Activated T-helper 1 cell treated with anti-CD3 and anti-CD28 coated beads, Interleukin-12 subunit alpha, Interleukin-12 subunit beta, Interleukin-2, Interleukin-4 antibody, amounts not matched to agents 30 ng/mL and 10 ng/mL and 1 ng/mL, durations not matched to agents 14 hours and 24 hours and 36 hours (primary cell): ENCODE measurements at regions of chr5 and their contacts with region 1.

Region 1: GRCh38 chr5:180291943-180292831 is at the start of gene MAPK9:
- DNase-seq: peak; percentile 83
- H3K4me3 Mint-ChIP-seq: peak within 1 kb of the TSS; percentile 96
- H3K27ac Mint-ChIP-seq: peak within 1 kb of the TSS; percentile 98
- H3K4me1 Mint-ChIP-seq: peaks cover 26% of the 10 kb centered on the region
- H3K27me3 Mint-ChIP-seq: no peaks in the 10 kb centered on the region
- total RNA-seq, gene MAPK9: 39.8 and 44.6 TPM in 2 replicates

Region 2: DNA sequence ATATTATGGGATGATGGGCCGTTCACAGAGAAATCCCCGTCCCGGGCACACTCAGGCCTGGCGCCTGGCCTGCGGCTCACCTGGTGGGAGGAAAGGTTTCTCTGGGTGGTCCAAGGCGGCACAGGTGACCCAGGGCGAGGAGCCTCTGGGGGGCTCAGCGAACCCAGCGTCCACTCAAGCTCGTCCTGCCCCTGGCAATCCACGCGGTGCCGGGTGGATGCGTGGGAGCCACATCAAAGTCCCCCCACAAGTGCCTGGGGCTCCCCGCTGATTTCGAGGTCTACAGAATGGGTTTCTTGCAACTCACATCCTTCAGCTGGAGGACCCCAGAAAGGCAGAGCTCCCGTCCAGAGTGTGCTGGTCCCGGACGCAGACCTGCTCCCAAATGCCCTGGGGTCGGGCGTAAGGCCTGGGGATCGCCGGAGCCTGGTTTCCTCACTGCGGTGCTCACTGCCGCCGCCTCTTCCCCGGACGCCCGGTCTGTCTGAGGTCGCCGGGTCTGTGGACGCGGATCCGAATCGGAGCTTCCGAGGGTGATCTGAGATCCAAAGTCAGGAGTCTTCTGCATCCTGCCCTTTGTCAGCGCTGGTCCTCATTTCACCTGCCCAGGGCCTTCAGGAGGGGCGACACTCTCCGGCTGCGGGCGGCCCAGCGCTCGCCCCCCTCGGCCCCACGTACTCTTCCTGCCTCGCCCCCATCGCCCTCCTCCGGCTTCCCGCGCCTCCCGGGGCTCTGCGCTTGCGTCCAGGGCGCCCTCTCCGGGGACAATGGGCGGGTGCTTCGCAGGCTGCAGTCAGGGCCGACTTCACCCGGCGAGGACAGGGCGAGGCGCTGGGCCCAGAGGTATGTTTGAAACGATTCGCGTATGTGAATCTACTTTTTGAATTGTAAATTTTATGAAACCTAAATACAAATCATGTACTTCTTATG is 761.9 kb before region 1 on chr5:
- intact Hi-C with region 1: loop called (anchors 2 kb)
- DNase-seq: peak; percentile 50
- H3K4me3 Mint-ChIP-seq: peak overlapping the region; percentile 39
- H3K27ac Mint-ChIP-seq: no peak overlapping the region
- H3K4me1 Mint-ChIP-seq: peaks cover 14% of the 10 kb centered on the region
- H3K27me3 Mint-ChIP-seq: peaks cover 6% of the 10 kb centered on the region

Region 3: DNA sequence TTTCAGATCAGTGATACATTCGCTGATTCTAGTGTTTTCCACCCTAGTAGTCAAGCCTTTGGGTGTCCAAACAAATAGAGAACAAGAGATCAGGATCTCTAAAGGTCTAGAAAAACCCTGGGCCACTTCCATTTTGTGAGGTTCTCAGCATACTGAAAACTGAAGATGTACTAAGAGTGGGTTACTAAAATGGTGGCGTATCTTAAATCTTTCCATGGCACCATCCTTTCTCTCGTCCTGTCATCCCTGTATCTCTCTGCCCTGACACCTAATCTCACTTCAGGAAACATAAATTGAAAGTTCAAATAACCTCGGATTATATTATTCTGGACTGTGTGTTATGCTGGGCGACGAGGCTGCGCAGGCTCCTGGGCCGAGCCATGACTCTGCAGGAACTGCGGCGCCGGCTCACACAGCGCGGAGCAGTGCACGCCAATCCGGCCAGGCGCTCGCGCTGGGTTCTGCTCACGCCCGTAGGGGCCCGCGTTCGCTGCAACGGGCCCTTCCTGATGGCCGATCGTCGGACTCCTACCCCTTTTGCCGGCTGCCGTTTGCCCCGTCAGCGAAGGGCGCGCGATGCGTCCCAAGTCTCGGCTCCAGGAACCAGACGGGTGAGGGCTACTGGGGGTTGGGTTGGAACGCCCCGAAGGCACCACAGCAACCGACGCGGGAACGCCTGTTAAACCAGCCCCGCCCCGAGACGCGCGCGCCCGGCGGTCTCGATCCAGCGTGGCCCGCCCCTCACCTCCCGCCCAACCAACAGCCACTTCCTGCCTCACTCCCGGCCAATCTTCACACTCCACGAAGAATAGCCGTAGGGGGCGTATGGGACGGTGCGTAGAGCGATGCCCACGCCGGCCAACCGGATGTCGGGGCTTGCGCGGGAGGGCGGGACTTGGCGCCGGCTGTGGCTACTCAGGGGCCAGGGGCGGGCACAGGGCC is 593.9 kb before region 1 on chr5:
- intact Hi-C with region 1: loop called (anchors 10 kb)
- DNase-seq: peak; percentile 99
- H3K4me3 Mint-ChIP-seq: peak overlapping the region; percentile 100
- H3K27ac Mint-ChIP-seq: peak overlapping the region; percentile 100
- H3K4me1 Mint-ChIP-seq: peaks cover 27% of the 10 kb centered on the region
- H3K27me3 Mint-ChIP-seq: no peaks in the 10 kb centered on the region

Region 4: DNA sequence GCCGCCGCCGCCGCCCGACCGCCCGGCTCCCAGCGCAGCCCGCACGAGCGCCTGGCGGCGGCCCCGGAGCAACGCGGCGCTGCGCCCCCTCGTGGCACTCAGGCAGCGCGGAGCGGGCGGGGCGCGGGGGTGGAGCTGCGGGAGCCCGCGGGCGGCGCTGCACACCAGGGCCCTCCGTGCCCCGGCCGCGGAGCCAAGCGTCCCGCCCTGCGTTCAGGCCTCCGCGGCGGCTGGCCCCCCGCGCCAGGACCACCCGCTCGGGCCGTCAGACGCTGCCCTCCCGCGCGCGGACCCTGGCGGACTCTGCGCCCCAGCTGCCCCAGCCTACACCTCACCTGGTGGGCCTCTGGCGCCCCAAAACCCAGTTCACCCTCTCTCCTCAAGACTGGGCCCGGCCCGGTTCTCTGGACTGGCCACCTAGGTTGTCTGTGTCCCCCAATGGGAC is 83.0 kb before region 1 on chr5 and contains the start of gene RASGEF1C:
- intact Hi-C with region 1: loop called (anchors 2 kb)
- DNase-seq: peak; percentile 50
- H3K4me3 Mint-ChIP-seq: peak within 1 kb of the TSS; percentile 45
- H3K27ac Mint-ChIP-seq: no peak within 1 kb of the TSS
- H3K4me1 Mint-ChIP-seq: peaks cover 9% of the 10 kb centered on the region
- H3K27me3 Mint-ChIP-seq: peaks cover 26% of the 10 kb centered on the region
- total RNA-seq, gene RASGEF1C: not detected in 2 replicates

Region 5: DNA sequence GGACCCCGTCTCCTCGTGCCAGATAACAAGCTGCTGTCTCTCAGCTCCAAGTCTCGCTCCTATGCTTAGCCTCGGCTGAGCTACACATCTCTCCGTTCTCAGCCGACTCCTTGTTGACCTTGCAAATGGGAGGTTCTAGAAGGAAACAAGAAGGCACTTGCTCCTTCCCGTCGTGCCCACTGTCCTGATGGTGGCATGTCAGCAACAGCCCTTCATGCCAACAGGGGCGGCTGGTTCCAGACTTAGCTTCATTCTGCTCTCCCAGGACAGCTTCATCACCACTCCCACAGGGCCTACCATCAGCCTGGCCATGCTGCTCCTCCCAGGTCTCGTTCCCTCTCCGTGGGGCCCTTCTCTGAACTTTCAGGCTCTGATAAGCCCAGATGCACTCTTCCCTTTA is 70.1 kb before region 1 on chr5:
- intact Hi-C with region 1: no loop called
- DNase-seq: no peak
- H3K4me3 Mint-ChIP-seq: no peak overlapping the region
- H3K27ac Mint-ChIP-seq: no peak overlapping the region
- H3K4me1 Mint-ChIP-seq: no peaks in the 10 kb centered on the region
- H3K27me3 Mint-ChIP-seq: peaks cover 3% of the 10 kb centered on the region

Region 6: GRCh38 chr5:180328296-180329137 is 36.3 kb after region 1 on chr5:
- intact Hi-C with region 1: loop called (anchors 1 kb)
- DNase-seq: peak; percentile 67
- H3K4me3 Mint-ChIP-seq: no peak overlapping the region
- H3K27ac Mint-ChIP-seq: no peak overlapping the region
- H3K4me1 Mint-ChIP-seq: no peaks in the 10 kb centered on the region
- H3K27me3 Mint-ChIP-seq: peaks cover 24% of the 10 kb centered on the region

Region 7: GRCh38 chr5:180470966-180471582 is 178.9 kb after region 1 on chr5:
- intact Hi-C with region 1: loop called (anchors 1 kb)
- DNase-seq: peak; percentile 20
- H3K4me3 Mint-ChIP-seq: no peak overlapping the region
- H3K27ac Mint-ChIP-seq: no peak overlapping the region
- H3K4me1 Mint-ChIP-seq: no peaks in the 10 kb centered on the region
- H3K27me3 Mint-ChIP-seq: peaks cover 7% of the 10 kb centered on the region

Region 8: DNA sequence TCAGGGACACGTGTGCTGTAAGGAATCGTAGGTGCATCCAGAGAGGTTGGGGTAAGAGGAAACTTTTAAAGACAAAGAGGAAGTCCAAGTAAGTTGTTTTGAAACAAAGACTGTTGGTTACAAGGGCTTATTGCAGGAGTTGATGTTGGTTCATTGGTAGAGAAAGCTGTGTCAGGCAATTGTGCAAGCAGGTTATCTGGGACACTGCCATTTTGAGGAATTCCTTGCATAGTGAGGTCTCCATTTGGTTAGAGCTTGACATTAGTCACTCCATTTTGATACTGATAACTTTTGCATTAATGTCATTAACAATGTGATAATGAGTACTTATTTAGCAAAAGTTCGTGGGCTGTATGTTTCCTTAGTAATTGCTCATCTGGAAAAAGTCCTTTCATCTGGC is 226.9 kb after region 1 on chr5:
- intact Hi-C with region 1: no loop called
- DNase-seq: no peak
- H3K4me3 Mint-ChIP-seq: no peak overlapping the region
- H3K27ac Mint-ChIP-seq: no peak overlapping the region
- H3K4me1 Mint-ChIP-seq: peaks cover 53% of the 10 kb centered on the region
- H3K27me3 Mint-ChIP-seq: no peaks in the 10 kb centered on the region

Region 9: GRCh38 chr5:180810210-180810958 is 518.2 kb after region 1 on chr5:
- intact Hi-C with region 1: loop called (anchors 2 kb)
- DNase-seq: peak; percentile 91
- H3K4me3 Mint-ChIP-seq: peak overlapping the region; percentile 84
- H3K27ac Mint-ChIP-seq: peak overlapping the region; percentile 99
- H3K4me1 Mint-ChIP-seq: peaks cover 78% of the 10 kb centered on the region
- H3K27me3 Mint-ChIP-seq: peaks cover 2% of the 10 kb centered on the region